ENCODE measurements at regions of chr4 and their contacts with region 1.

Region 1: GRCh38 chr4:165991318-165992180 is 118.5 kb downstream of the TLL1 start:
- DNase-seq: no peak
- ATAC-seq: no peak
- H3K4me3 ChIP-seq: no peak overlapping the region
- H3K27ac ChIP-seq: no peak overlapping the region
- H3K4me1 ChIP-seq: no peaks in the 10 kb centered on the region
- H3K27me3 ChIP-seq: no peaks in the 10 kb centered on the region
- CTCF ChIP-seq: no peak
- EP300 ChIP-seq: no peak
- POLR2A ChIP-seq: no peak
- RAD21 ChIP-seq: no peak

Region 2: GRCh38 chr4:165425629-165426028 is 565.9 kb before region 1 on chr4:
- CTCF ChIA-PET with region 1: no interaction called
- POLR2A ChIA-PET with region 1: no interaction called
- in situ Hi-C with region 1: no loop called
- intact Hi-C with region 1: loop called (anchors 5 kb)
- DNase-seq: no peak
- ATAC-seq: no peak
- H3K4me3 ChIP-seq: no peak overlapping the region
- H3K27ac ChIP-seq: no peak overlapping the region
- H3K4me1 ChIP-seq: no peaks in the 10 kb centered on the region
- H3K27me3 ChIP-seq: no peaks in the 10 kb centered on the region
- CTCF ChIP-seq: no peak
- EP300 ChIP-seq: no peak
- POLR2A ChIP-seq: no peak
- RAD21 ChIP-seq: 0 out of 4 replicates have a peak, but pooled peaks of 1 of the 2 experiments have one; percentile 8

Region 3: GRCh38 chr4:166121897-166122296 is 130.3 kb after region 1 on chr4:
- CTCF ChIA-PET with region 1: no interaction called
- POLR2A ChIA-PET with region 1: no interaction called
- in situ Hi-C with region 1: no loop called
- intact Hi-C with region 1: no loop called
- DNase-seq: no peak
- ATAC-seq: no peak
- H3K4me3 ChIP-seq: no peak overlapping the region
- H3K27ac ChIP-seq: no peak overlapping the region
- H3K4me1 ChIP-seq: no peaks in the 10 kb centered on the region
- H3K27me3 ChIP-seq: no peaks in the 10 kb centered on the region
- CTCF ChIP-seq: no peak
- EP300 ChIP-seq: no peak
- POLR2A ChIP-seq: no peak
- RAD21 ChIP-seq: no peak